ENCODE measurements at regions of chr17 and their contacts with region 1.

Region 1: DNA sequence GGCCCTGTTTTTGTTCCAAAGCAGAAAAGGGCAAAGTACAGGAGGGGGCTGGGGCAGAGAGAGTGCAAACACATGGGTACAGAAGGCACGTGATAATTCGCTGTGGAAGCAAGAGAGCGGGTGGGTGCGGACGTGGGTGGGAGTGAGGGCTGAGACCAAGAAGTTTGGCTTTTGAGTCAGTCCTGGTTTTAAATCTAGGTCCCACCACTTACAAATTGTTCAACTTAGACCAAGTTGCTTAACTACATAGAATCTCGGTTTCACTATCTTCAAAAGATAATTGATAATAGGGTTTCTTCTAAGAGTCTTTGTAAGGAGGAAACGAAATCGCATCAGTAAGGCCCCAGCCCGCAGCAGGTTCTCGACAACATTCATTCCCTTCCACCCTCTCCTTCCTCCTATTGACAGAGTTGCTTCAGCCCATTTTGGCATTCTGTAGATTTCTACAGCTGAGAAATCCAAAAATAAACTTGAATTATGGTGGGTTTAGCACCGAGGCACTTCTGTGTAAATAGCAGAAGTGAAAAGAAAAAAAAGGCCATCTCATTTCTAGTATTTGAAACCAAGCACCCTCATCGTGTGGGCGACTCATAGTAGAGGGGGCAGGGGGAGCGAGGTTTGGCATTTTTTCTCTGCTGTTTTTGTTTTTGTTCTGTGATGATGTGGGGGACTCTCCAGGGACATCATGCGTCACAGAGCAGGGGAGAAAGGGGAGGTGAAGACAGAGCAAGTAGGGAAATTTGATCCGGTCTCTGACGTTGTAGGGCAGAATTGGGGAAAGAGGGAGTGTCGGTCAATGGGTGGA is 33.6 kb upstream of the CCR7 start:
- DNase-seq: peak; percentile 88
- H3K4me3 Mint-ChIP-seq: peak overlapping the region; percentile 62
- H3K27ac Mint-ChIP-seq: peak overlapping the region; percentile 92
- H3K4me1 Mint-ChIP-seq: peaks cover 72% of the 10 kb centered on the region
- H3K27me3 Mint-ChIP-seq: no peaks in the 10 kb centered on the region

Region 2: GRCh38 chr17:40417609-40418427 is 181.0 kb before region 1 on chr17 and contains the start of gene TOP2A:
- intact Hi-C with region 1: loop called (anchors 5 kb)
- DNase-seq: peak; percentile 99
- H3K4me3 Mint-ChIP-seq: peak within 1 kb of the TSS; percentile 99
- H3K27ac Mint-ChIP-seq: peak within 1 kb of the TSS; percentile 97
- H3K4me1 Mint-ChIP-seq: peaks cover 31% of the 10 kb centered on the region
- H3K27me3 Mint-ChIP-seq: no peaks in the 10 kb centered on the region
- total RNA-seq, gene TOP2A: 189 and 194 TPM in 2 replicates

Region 3: GRCh38 chr17:40542558-40543411 is 56.1 kb before region 1 on chr17:
- intact Hi-C with region 1: loop called (anchors 1 kb)
- DNase-seq: peak; percentile 83
- H3K4me3 Mint-ChIP-seq: peak overlapping the region; percentile 66
- H3K27ac Mint-ChIP-seq: peak overlapping the region; percentile 92
- H3K4me1 Mint-ChIP-seq: peaks cover 80% of the 10 kb centered on the region
- H3K27me3 Mint-ChIP-seq: no peaks in the 10 kb centered on the region

Region 4: DNA sequence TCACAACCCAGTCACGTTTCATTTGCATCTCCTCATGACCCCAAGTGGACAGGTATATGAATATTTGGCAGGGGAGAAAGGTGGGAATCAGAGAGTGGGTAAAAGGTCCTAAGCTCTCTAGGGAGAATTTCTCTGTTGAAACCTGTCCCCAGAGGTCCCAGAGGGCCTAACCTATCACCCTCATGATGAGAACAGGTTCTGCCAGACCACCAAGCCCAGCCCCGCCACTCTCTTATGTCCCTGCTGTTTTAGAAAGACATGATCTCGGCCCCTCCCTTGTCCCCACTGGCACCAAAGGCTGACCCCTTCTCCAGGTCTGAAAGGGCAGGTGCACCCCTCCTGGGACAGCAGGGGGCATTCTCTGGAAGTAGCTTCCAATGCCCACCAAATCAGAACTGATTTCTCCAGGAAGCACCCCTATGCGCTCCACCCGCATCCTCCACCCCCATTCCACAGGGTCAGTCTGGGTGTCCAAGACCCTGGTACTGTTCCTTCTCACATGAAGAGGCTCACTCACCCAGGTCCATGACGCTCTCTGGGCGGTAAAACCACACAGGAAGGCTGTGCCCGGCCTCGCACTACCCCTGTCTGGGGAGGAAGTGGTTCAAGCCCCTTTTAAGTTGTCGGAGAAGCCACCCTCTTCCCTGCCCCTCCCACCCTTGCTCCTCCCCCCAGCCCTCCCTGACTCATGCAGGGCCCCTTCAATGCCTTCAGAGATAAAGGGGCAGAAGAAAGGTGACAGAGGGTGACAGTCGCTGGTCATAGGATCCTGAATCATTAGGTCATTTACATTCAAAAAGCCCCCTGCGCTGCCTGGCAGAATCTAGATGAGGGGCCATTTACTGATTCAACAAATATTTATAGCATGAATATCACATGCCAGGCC is 33.7 kb before region 1 on chr17 and contains the start of gene CCR7:
- intact Hi-C with region 1: loop called (anchors 1 kb)
- DNase-seq: peak; percentile 93
- H3K4me3 Mint-ChIP-seq: peak within 1 kb of the TSS; percentile 95
- H3K27ac Mint-ChIP-seq: peak within 1 kb of the TSS; percentile 100
- H3K4me1 Mint-ChIP-seq: peaks cover 37% of the 10 kb centered on the region
- H3K27me3 Mint-ChIP-seq: no peaks in the 10 kb centered on the region
- total RNA-seq, gene CCR7: 217 and 220 TPM in 2 replicates

Region 5: DNA sequence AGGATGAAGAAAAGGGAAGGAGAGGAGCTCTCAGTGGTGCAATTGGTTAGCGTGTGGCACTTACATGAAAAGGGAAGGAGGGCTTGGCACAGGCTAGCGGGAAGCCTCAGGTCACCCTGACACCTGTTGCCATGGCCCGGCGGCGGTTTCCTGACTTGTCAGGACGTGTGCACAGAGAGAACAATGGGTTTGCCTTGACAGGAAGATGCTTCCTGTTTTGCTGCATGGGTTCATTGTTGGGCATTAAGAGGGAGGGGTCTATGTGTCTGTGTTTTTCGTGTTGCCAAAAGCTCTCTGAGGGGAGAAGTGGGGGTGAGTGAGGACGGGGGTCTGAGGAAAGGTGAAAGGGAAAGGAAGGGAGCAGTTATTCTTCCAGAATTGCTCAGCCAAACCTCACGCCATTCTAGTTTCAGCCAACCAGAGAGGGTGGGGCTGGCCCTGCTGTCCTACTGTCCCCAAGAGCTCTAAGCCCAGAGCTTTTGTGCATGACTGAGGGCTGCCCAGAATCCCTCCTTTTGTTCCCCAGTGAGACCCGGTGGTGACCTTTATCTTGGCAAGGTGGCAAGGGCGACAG is 16.4 kb before region 1 on chr17:
- intact Hi-C with region 1: loop called (anchors 1 kb)
- DNase-seq: peak; percentile 90
- H3K4me3 Mint-ChIP-seq: peak overlapping the region; percentile 62
- H3K27ac Mint-ChIP-seq: peak overlapping the region; percentile 89
- H3K4me1 Mint-ChIP-seq: peaks cover 72% of the 10 kb centered on the region
- H3K27me3 Mint-ChIP-seq: no peaks in the 10 kb centered on the region

Region 6: DNA sequence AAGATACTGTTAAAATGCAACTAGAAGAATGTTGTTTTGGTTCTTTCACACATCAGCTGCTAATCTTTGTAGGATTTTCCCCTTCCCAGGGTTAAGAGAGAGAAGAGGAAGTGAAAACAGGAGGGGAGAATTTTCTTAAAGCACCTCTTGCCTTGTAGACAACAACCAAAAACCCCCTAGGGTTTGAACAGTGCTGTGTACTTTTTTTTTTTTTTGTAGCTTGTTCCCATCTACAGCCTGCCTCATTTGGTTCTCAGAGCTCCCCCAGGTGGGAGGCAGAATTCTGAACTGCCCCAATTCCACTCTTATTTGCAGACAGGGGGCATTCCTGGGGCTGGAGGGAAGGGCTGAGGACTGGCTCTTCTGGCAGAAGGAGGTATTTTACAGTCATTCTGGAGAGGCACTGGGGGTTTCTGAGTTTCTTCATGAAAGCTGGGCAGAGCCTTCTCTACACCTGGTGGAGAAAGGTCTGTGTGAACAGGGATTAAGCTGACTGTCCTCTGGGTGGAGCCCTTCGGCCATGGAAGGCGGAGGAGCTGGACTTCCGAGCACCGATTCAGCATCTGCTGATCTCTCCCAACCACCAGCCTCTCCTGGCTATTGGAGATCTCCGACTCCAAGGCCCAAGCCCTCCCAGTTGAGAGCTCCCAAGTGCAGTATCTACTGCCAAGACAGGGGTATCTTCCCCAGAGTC is 16.6 kb after region 1 on chr17:
- intact Hi-C with region 1: loop called (anchors 1 kb)
- DNase-seq: peak; percentile 81
- H3K4me3 Mint-ChIP-seq: peak overlapping the region; percentile 47
- H3K27ac Mint-ChIP-seq: peak overlapping the region; percentile 85
- H3K4me1 Mint-ChIP-seq: peaks cover 67% of the 10 kb centered on the region
- H3K27me3 Mint-ChIP-seq: no peaks in the 10 kb centered on the region